ENCODE measurements at regions of chr19 and their contacts with region 1.

Region 1: GRCh38 chr19:55599468-55600279 is at the start of gene FIZ1:
- DNase-seq: peak; percentile 98
- H3K4me3 ChIP-seq: peak within 1 kb of the TSS; percentile 80 to 96 (median 86)
- H3K27ac ChIP-seq: peak within 1 kb of the TSS; percentile 96 to 100 (median 98)
- H3K4me1 ChIP-seq: peaks cover 12 to 22% (median 16%) of the 10 kb centered on the region in 4 donors
- H3K27me3 ChIP-seq: no peaks in the 10 kb centered on the region
- CTCF ChIP-seq: peak in 1 of 5 experiments; percentile 8
- EP300 ChIP-seq: no peak
- POLR2A ChIP-seq: peak; percentile 20
- total RNA-seq, gene FIZ1: 8.5 to 137 (median 18.3) TPM

Region 2: GRCh38 chr19:55117636-55118391 is 481.9 kb before region 1 on chr19 and contains the start of gene PPP1R12C:
- in situ Hi-C with region 1: no loop called
- intact Hi-C with region 1: loop called (anchors 10 kb)
- DNase-seq: peak; percentile 99
- H3K4me3 ChIP-seq: peak within 1 kb of the TSS; percentile 69 to 95 (median 80)
- H3K27ac ChIP-seq: peak within 1 kb of the TSS; percentile 92 to 96 (median 95)
- H3K4me1 ChIP-seq: peaks cover 24 to 44% (median 40%) of the 10 kb centered on the region in 4 donors
- H3K27me3 ChIP-seq: peaks cover 4% of the 10 kb centered on the region
- CTCF ChIP-seq: peak in 2 of 5 experiments; percentile 25 to 26
- EP300 ChIP-seq: no peak
- POLR2A ChIP-seq: no peak
- total RNA-seq, gene PPP1R12C: 101 to 350 (median 154) TPM

Region 3: GRCh38 chr19:55398200-55398925 is 201.3 kb before region 1 on chr19:
- in situ Hi-C with region 1: no loop called
- intact Hi-C with region 1: no loop called
- DNase-seq: no peak
- H3K4me3 ChIP-seq: no peak overlapping the region
- H3K27ac ChIP-seq: no peak overlapping the region
- H3K4me1 ChIP-seq: no peaks in the 10 kb centered on the region
- H3K27me3 ChIP-seq: no peaks in the 10 kb centered on the region
- CTCF ChIP-seq: no peak
- EP300 ChIP-seq: no peak
- POLR2A ChIP-seq: no peak

Region 4: GRCh38 chr19:55678121-55678675 is 78.5 kb after region 1 on chr19:
- in situ Hi-C with region 1: no loop called
- intact Hi-C with region 1: no loop called
- DNase-seq: peak; percentile 70
- H3K4me3 ChIP-seq: peak overlapping the region in 1 of 4 donors; percentile 65
- H3K27ac ChIP-seq: peak overlapping the region; percentile 59 to 99 (median 95)
- H3K4me1 ChIP-seq: peaks cover 22 to 75% (median 44%) of the 10 kb centered on the region in 4 donors
- H3K27me3 ChIP-seq: no peaks in the 10 kb centered on the region
- CTCF ChIP-seq: no peak
- EP300 ChIP-seq: no peak
- POLR2A ChIP-seq: no peak

Measured in transverse colon (tissue), 4 donors.